ENCODE measurements at regions of chr6 and their contacts with region 1.

Region 1: GRCh38 chr6:134097114-134097707 is 44.8 kb upstream of the SLC2A12 start:
- DNase-seq: peak; percentile 75
- H3K4me3 ChIP-seq: no peak overlapping the region
- CTCF ChIP-seq: peak; percentile 50

Region 2: GRCh38 chr6:133595111-133595761 is 502.0 kb before region 1 on chr6:
- in situ Hi-C with region 1: loop called (anchors 25 kb)
- DNase-seq: no peak
- H3K4me3 ChIP-seq: no peak overlapping the region
- CTCF ChIP-seq: no peak

Region 3: DNA sequence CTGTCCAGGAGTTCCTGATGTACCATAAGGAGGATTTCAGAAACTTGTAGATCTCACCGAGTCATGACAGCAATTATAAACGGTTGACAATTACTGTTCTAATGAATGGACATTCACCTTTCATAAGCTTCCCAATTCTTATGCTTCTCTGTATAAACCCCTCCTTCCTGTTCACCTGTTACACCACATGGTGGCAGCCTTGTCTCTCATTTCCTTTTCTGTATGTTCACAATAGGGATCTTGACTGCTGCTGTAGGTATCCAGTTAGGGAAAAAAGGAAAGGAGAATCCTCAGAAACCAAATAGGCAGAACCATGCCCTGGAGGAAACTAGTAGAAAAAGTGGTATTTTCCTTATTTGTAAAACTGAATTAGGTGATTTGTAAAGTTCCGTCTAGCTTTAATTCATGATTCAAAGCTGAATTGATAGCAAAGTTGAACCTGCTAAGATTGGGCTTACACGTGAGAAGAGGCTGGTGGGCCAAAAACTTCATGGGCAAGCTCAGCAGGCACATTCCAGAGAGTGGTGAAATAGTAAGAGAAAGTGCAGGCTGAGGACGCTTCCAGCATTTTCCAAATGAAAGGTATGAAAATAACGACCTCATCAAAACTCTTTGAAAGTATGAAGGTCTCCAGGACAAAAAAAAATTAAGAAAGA is 173.1 kb before region 1 on chr6:
- in situ Hi-C with region 1: loop called (anchors 5 kb)
- DNase-seq: peak; percentile 85
- H3K4me3 ChIP-seq: no peak overlapping the region
- CTCF ChIP-seq: peak; percentile 77